Posterior cingulate gyrus (tissue), 11 donors: ENCODE measurements at regions of chr7 and their contacts with region 1.

Region 1: DNA sequence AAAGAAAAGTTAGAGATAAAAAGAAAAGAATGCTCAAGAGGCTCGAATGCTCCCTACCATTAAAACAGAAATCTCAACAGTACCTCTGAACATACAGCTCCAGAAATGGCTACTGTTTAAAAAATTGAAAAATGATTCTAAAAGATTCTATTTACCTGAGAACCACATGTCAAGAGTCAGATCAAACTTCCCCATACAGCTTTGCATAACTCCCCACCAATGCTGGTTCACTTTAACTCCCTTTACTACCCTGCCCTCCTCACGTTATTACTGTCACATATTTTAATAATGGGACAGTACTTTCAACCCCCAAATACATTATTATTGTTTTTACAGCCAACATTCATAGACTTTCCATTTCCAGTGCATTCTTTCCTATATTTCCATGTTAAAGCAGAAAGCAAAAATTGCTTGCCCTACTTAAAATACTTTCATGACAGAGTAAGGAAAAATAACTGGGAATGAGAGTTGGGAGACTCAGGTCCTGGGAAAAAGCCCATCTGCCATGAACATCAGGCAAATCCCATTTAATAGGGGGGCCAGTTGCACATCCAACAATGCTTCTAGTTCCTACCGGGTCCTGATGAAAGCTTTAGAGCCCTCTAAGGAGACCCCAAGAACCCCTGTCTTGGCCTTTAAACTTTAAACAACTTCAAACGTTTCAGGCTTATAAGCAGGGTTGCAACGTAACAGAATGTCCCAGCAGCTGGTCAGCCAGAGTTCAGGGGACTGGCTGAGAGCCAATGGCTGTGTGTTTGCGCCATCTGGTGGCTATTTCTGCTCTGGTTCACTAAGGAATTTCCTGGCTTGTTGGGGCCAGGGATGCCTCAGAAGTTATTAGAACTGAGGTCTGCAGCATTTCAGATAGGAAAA is 247.4 kb downstream of the ELMO1 start:
- DNase-seq: peak; percentile 58 to 96 (median 82)

Region 2: GRCh38 chr7:36487756-36488336 is 713.4 kb before region 1 on chr7:
- intact Hi-C with region 1: loop called (anchors 2 kb)
- DNase-seq: no peak

Region 3: GRCh38 chr7:36683695-36684357 is 517.4 kb before region 1 on chr7:
- intact Hi-C with region 1: loop called (anchors 5 kb)
- DNase-seq: no peak

Region 4: DNA sequence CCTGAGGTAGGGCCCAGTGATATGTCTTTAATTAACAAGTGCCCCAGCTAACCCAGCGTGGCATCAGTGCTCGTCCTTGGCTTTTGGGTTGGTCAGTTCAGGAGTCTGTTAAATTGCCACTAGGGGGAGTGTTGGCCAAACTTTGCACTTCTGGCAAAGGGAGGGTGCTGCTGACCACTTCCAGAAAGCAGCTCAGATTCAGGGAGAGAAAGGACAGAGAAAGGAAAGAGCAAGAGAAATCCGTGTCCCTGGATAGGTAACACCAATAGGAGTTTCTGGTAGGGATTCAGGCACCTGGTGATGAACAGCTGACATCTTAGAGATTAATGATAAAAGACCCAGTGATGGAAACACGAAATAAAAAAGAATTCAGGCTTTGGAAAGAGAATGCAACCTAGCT is 233.9 kb before region 1 on chr7:
- intact Hi-C with region 1: loop called (anchors 5 kb)
- DNase-seq: peak in 7 of 10 donors; percentile 31 to 92 (median 61)

Region 5: DNA sequence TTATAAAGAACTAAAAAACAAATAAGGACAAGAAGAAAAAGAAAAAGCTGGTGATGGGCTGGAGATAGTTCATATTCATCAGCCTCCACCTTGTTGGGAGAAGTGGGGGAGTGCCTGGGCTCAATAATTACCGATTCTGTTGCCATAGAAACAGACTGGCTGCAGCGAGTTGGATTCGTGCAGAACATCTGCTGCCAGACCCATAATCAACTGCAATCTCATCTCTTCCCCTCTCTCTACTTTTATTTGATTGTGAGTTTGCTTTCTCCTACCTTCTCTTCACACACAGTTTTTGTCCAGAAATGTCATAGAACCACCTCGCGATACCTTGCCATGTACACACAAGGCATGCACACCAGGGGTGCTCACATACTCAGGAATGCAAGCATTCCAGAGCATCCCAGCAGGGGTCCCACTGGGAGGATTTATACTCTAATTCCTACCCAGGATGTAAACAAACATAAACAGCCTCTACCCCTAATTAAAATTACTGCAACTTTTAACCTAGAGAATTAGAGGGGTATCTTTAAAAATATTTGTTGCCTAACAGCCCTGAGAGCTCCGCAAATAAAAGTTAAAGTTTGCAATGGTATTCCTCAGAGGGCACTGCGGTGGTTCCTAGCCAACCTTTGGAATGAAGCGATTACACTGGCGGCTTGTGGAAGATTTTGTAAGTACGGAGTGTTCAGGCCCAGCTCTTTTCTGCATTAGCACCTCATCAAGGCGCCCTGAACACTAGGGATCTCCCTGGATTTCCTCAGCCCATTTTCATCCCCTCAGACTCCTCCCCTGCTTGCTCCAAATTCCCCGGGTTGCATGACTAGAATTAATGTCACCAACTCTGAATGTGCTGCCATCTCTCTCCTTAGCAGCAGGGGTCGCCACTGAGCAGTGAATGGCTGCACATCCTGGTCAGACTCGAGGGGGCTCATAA is 214.5 kb before region 1 on chr7:
- intact Hi-C with region 1: loop called (anchors 5 kb)
- DNase-seq: peak; percentile 50 to 95 (median 80)

Region 6: GRCh38 chr7:37284805-37285231 is 83.6 kb after region 1 on chr7:
- intact Hi-C with region 1: loop called (anchors 10 kb)
- DNase-seq: peak; percentile 39 to 95 (median 72)